MCF 10A (cell line): ENCODE measurements at regions of chr19 and their contacts with region 1.

Region 1: GRCh38 chr19:9627856-9628255 is 6.8 kb upstream of the ZNF561 start:
- DNase-seq: no peak
- H3K4me3 Mint-ChIP-seq: no peak overlapping the region
- H3K27ac Mint-ChIP-seq: no peak overlapping the region
- H3K4me1 Mint-ChIP-seq: peaks cover 13% of the 10 kb centered on the region
- H3K27me3 Mint-ChIP-seq: no peaks in the 10 kb centered on the region
- CTCF ChIP-seq: no peak

Region 2: GRCh38 chr19:9645472-9645871 is 17.6 kb after region 1 on chr19:
- CTCF ChIA-PET with region 1: interaction called, 10 read pairs
- POLR2A ChIA-PET with region 1: interaction called, 6 read pairs
- intact Hi-C with region 1: no loop called
- DNase-seq: no peak
- H3K4me3 Mint-ChIP-seq: no peak overlapping the region
- H3K27ac Mint-ChIP-seq: no peak overlapping the region
- H3K4me1 Mint-ChIP-seq: no peaks in the 10 kb centered on the region
- H3K27me3 Mint-ChIP-seq: no peaks in the 10 kb centered on the region
- CTCF ChIP-seq: no peak

Region 3: DNA sequence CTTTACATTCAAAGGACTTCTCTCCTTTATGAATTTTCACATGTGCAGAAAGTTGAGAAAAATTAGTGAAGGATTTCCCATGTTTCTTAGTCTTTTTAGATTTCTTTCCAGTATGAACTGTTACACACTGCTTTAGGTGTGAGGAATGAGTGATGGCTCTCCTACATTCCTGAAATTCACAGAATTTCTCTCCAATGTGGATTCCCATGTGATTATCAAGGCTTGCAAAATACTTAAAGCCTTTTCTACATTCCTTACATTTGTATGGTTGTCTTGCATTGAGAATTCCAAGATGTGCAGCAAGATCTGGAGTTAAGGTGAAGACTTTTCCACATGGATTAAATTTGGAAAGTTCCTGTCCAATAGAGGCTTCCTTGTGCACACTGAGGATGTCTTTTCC is 62.9 kb after region 1 on chr19:
- CTCF ChIA-PET with region 1: no interaction called
- POLR2A ChIA-PET with region 1: no interaction called
- intact Hi-C with region 1: no loop called
- DNase-seq: no peak
- H3K4me3 Mint-ChIP-seq: no peak overlapping the region
- H3K27ac Mint-ChIP-seq: no peak overlapping the region
- H3K4me1 Mint-ChIP-seq: no peaks in the 10 kb centered on the region
- H3K27me3 Mint-ChIP-seq: no peaks in the 10 kb centered on the region
- CTCF ChIP-seq: no peak